CD8-positive, alpha-beta T cell (primary cell): ENCODE measurements at regions of chr17 and their contacts with region 1.

Region 1: GRCh38 chr17:76997981-76998531 is 129.9 kb downstream of the MGAT5B start:
- DNase-seq: peak; percentile 29 to 95 (median 55)
- ATAC-seq: peak; percentile 90
- H3K4me3 ChIP-seq: peak overlapping the region; percentile 1 to 14
- H3K4me3 Mint-ChIP-seq: peak overlapping the region; percentile 58
- H3K27ac ChIP-seq: peak overlapping the region; percentile 52 to 83
- H3K27ac Mint-ChIP-seq: peak overlapping the region; percentile 89
- H3K4me1 ChIP-seq: peaks cover 58% of the 10 kb centered on the region
- H3K4me1 Mint-ChIP-seq: peaks cover 57% of the 10 kb centered on the region
- H3K27me3 ChIP-seq: no peaks in the 10 kb centered on the region
- H3K27me3 Mint-ChIP-seq: no peaks in the 10 kb centered on the region
- CTCF ChIP-seq: no peak

Region 2: GRCh38 chr17:76968707-76969597 is 29.1 kb before region 1 on chr17:
- CTCF ChIA-PET with region 1: interaction called, 5 read pairs
- POLR2A ChIA-PET with region 1: interaction called, 9 read pairs
- intact Hi-C with region 1: loop called in 1 of 2 experiments (anchors 1 kb)
- DNase-seq: peak; percentile 18 to 78 (median 55)
- ATAC-seq: peak; percentile 84
- H3K4me3 ChIP-seq: peak overlapping the region; percentile 52 to 59
- H3K4me3 Mint-ChIP-seq: peak overlapping the region; percentile 85
- H3K27ac ChIP-seq: peak overlapping the region in 1 of 2 experiments; percentile 37
- H3K27ac Mint-ChIP-seq: peak overlapping the region; percentile 79
- H3K4me1 ChIP-seq: peaks cover 11% of the 10 kb centered on the region
- H3K4me1 Mint-ChIP-seq: peaks cover 20% of the 10 kb centered on the region
- H3K27me3 ChIP-seq: peaks cover 0 to 8% of the 10 kb centered on the region in 2 experiments
- H3K27me3 Mint-ChIP-seq: no peaks in the 10 kb centered on the region
- CTCF ChIP-seq: no peak

Region 3: GRCh38 chr17:76983075-76983775 is 14.8 kb before region 1 on chr17:
- CTCF ChIA-PET with region 1: interaction called, 3 read pairs
- POLR2A ChIA-PET with region 1: interaction called, 11 read pairs
- intact Hi-C with region 1: loop called in 1 of 2 experiments (anchors 2 kb)
- DNase-seq: no peak
- ATAC-seq: peak; percentile 32
- H3K4me3 ChIP-seq: no peak overlapping the region
- H3K4me3 Mint-ChIP-seq: no peak overlapping the region
- H3K27ac ChIP-seq: no peak overlapping the region
- H3K27ac Mint-ChIP-seq: peak overlapping the region; percentile 89
- H3K4me1 ChIP-seq: peaks cover 20% of the 10 kb centered on the region
- H3K4me1 Mint-ChIP-seq: peaks cover 23% of the 10 kb centered on the region
- H3K27me3 ChIP-seq: no peaks in the 10 kb centered on the region
- H3K27me3 Mint-ChIP-seq: no peaks in the 10 kb centered on the region
- CTCF ChIP-seq: no peak

Region 4: GRCh38 chr17:77247048-77247541 is 249.0 kb after region 1 on chr17:
- CTCF ChIA-PET with region 1: no interaction called
- POLR2A ChIA-PET with region 1: no interaction called
- intact Hi-C with region 1: no loop called
- DNase-seq: peak; percentile 77 to 93 (median 85)
- ATAC-seq: peak; percentile 99
- H3K4me3 ChIP-seq: peak overlapping the region; percentile 37 to 55
- H3K4me3 Mint-ChIP-seq: peak overlapping the region; percentile 69
- H3K27ac ChIP-seq: no peak overlapping the region
- H3K27ac Mint-ChIP-seq: peak overlapping the region; percentile 27
- H3K4me1 ChIP-seq: peaks cover 11% of the 10 kb centered on the region
- H3K4me1 Mint-ChIP-seq: peaks cover 9% of the 10 kb centered on the region
- H3K27me3 ChIP-seq: no peaks in the 10 kb centered on the region
- H3K27me3 Mint-ChIP-seq: peaks cover 26% of the 10 kb centered on the region
- CTCF ChIP-seq: peak; percentile 97